ENCODE measurements at regions of chr11 and their contacts with region 1.

Region 1: GRCh38 chr11:12331239-12331874 is 46.0 kb upstream of the PARVA start:
- DNase-seq: peak; percentile 40
- H3K4me3 ChIP-seq: no peak overlapping the region
- H3K27me3 ChIP-seq: no peaks in the 10 kb centered on the region
- CTCF ChIP-seq: peak; percentile 69

Region 2: DNA sequence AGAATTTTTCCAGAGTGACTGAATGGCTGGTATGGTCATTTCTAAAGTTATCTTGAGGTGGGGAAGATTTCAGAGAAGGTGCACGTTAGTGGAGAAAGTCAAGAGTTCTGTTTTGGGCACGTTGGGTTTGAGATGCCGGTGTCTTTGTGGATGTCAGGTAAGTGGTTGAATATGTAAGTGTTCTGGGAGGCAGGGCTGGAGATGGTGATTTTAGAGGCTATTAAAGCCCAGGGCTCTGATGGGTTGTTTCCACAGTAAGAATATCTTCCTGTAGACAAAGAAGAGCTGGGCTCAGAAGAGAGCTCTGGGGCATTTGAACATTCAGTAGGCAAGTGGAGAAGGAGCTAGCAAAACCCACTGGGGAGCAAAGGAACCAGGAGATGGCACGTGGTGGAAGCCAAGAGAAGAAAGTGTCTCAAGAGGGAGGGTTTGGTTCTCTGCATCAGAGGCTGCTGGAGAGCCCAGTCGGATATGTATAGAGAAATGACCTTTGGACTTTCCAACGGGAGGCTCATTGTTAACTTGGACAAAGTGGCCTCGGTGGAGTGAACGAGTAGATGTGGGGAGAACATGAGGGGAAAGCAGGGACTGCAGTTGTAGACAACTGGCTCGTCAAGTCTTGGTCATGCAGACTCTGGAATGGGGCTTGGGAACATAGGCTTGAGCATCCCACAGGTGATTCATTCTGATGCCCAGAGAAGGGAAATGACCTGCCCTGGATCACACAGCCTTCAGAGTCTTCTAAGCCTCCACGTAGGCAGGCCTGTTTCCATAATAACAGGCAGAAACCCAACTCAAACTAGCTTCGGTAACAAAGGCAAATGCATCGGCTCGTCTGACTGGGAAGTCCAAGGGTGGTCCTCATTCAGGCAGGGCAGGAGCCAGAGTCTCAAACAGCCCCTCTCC is 52.3 kb before region 1 on chr11:
- CTCF ChIA-PET with region 1: no interaction called
- POLR2A ChIA-PET with region 1: no interaction called
- DNase-seq: no peak
- H3K4me3 ChIP-seq: no peak overlapping the region
- H3K27me3 ChIP-seq: no peaks in the 10 kb centered on the region
- CTCF ChIP-seq: no peak

Region 3: GRCh38 chr11:12318791-12319438 is 12.4 kb before region 1 on chr11:
- CTCF ChIA-PET with region 1: interaction called, 16 read pairs
- POLR2A ChIA-PET with region 1: interaction called, 6 read pairs
- DNase-seq: peak; percentile 84
- H3K4me3 ChIP-seq: no peak overlapping the region
- H3K27me3 ChIP-seq: no peaks in the 10 kb centered on the region; the same call in 1 of the 2 replicates
- CTCF ChIP-seq: no peak

Region 4: DNA sequence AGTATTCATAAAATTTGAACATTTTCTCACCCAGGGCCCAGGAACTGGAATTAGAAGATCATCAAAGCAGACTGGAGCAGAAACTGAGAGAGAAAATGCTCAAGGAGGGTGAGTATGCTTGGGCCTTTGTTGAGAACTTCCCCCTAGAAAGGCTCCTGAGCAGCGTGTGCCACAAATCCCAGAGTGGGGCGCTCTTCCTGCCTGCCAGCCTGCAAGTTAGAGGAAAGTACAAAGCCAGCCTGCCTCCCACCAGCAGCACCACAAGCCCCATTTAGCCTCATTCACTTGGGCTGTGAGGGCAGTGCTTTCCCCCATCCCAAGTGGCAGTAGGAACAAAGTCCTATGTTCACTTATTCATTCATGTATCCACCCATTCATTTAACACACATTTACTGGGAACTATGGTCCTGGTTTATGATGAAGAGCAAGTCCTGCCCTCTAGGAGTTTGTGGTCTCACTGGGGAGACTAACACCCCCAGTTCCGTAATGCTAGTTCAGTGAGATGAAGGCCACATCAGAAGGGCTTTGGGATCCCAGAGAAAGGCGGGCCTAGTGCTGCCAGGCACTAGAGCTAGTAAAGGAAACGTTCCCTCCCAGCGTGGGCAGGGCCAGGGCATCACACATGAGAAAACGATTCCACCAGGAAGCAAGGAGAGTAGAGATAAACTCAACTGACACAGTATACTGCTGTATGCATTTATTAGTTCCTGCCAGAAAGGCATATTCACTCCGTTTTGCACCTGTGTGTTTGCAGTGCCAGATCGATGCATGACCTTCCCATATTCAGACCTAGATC is 23.6 kb after region 1 on chr11:
- CTCF ChIA-PET with region 1: no interaction called
- POLR2A ChIA-PET with region 1: no interaction called
- DNase-seq: no peak
- H3K4me3 ChIP-seq: no peak overlapping the region
- H3K27me3 ChIP-seq: no peaks in the 10 kb centered on the region
- CTCF ChIP-seq: no peak